GM12878 (cell line): ENCODE measurements at regions of chr1 and their contacts with region 1.

Region 1: DNA sequence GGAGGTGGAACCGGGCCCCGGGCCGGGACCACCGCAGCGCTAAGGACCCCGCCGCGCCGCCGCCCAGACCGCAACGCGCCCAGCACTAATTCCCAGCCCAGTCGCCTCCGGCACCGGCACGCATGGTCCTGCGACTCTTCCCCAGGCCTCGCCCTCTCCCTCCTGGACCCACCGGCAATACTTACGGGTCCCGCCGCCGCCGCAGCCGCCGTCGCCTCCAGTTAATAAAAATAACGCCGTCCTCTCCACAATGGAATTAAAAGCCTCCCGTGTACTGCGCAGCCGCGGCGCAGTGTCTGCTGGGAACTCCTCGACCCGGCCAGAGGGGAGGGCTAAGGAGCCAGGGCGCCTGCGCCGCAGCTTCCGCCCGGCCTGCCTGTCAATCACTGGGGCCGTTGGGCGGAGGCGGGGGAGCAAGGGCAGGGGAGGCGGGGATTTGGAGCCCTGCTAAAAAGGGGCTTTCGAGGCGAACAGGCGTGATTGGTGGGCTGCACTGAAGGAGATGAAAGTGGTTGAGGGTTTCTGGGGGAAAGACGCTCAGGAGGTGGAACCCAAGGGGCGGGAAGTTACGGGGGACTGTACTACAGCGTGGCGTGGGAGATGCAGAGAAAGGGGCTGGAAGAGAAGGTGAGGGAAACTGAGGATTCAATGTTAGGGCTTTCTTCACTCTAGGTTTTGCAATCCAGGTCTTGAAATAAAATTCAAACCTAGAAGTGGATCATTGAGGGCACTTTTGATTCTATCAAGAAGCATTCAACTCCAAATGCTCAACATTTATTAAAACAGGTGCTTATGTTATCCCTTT is at the start of gene ZNF281:
- DNase-seq: peak; percentile 85
- ATAC-seq: peak; percentile 94
- H3K4me3 ChIP-seq: peak within 1 kb of the TSS; percentile 82
- H3K27ac ChIP-seq: peak within 1 kb of the TSS; percentile 91
- H3K4me1 ChIP-seq: peaks cover 18% of the 10 kb centered on the region
- H3K27me3 ChIP-seq: no peaks in the 10 kb centered on the region
- CTCF ChIP-seq: no peak
- EP300 ChIP-seq: no peak
- POLR2A ChIP-seq: peak; percentile 80
- RAD21 ChIP-seq: no peak
- polyA plus RNA-seq, gene ZNF281: 8.3 to 9.4 TPM

Region 2: GRCh38 chr1:200423235-200423634 is 13.3 kb after region 1 on chr1:
- CTCF ChIA-PET with region 1: interaction called, 4 read pairs
- POLR2A ChIA-PET with region 1: no interaction called
- RAD21 ChIA-PET with region 1: no interaction called
- SMC1A ChIA-PET with region 1: interaction called, 15 read pairs
- in situ Hi-C with region 1: no loop called
- intact Hi-C with region 1: no loop called
- DNase-seq: no peak
- ATAC-seq: no peak
- H3K4me3 ChIP-seq: no peak overlapping the region
- H3K27ac ChIP-seq: no peak overlapping the region
- H3K4me1 ChIP-seq: no peaks in the 10 kb centered on the region
- H3K27me3 ChIP-seq: no peaks in the 10 kb centered on the region
- CTCF ChIP-seq: no peak
- EP300 ChIP-seq: no peak
- POLR2A ChIP-seq: no peak
- RAD21 ChIP-seq: no peak

Region 3: GRCh38 chr1:200437556-200438203 is 27.7 kb after region 1 on chr1:
- CTCF ChIA-PET with region 1: interaction called, 3 read pairs
- POLR2A ChIA-PET with region 1: no interaction called
- RAD21 ChIA-PET with region 1: interaction called, 8 read pairs
- SMC1A ChIA-PET with region 1: interaction called, 11 read pairs
- in situ Hi-C with region 1: no loop called
- intact Hi-C with region 1: no loop called
- DNase-seq: no peak
- ATAC-seq: peak; percentile 91
- H3K4me3 ChIP-seq: no peak overlapping the region
- H3K27ac ChIP-seq: peak overlapping the region; percentile 35
- H3K4me1 ChIP-seq: peaks cover 6% of the 10 kb centered on the region; the same call in 1 of the 2 replicates
- H3K27me3 ChIP-seq: no peaks in the 10 kb centered on the region
- CTCF ChIP-seq: no peak
- EP300 ChIP-seq: no peak
- POLR2A ChIP-seq: no peak
- RAD21 ChIP-seq: no peak

Region 4: DNA sequence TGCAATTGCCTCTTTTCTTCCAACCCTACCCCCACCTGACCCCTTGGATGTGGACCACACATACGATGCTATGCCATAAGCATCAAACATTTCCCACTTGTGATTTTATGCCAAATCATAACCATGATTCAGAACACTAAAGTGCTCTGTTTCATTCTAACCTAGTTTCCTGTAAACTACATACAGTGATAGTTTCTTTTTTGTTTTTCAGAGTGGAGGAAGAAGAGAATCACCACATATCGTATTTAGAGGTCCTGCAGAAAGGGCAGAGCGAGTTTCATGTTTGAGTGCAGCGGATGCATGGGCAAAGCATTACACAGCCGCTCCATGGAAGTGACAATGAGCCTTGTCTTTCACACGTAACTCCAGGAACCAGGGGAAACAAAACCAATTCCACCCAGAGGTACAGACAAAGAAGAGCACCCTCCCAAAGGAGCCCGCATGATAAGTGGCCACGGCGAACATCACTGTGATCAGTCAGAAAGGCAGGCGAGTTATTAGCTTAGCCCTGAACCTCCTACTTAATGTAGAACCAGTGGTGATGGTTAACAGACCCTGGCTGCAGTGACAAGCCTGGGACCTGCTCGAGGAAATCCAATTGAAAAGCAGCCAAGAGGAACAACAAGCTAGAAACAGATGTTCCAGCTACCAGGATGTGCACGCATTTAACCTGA is 63.9 kb after region 1 on chr1:
- CTCF ChIA-PET with region 1: interaction called, 7 read pairs
- POLR2A ChIA-PET with region 1: interaction called, 13 read pairs
- RAD21 ChIA-PET with region 1: interaction called, 13 read pairs
- SMC1A ChIA-PET with region 1: interaction called, 59 read pairs
- in situ Hi-C with region 1: no loop called
- intact Hi-C with region 1: no loop called
- DNase-seq: peak; percentile 57
- ATAC-seq: peak; percentile 69
- H3K4me3 ChIP-seq: peak overlapping the region; percentile 43
- H3K27ac ChIP-seq: peak overlapping the region; percentile 78
- H3K4me1 ChIP-seq: peaks cover 36% of the 10 kb centered on the region
- H3K27me3 ChIP-seq: no peaks in the 10 kb centered on the region
- CTCF ChIP-seq: no peak
- EP300 ChIP-seq: peak in 1 of 2 experiments; percentile 29; a peak in 1 of 4 replicates
- POLR2A ChIP-seq: peak; percentile 28; the same call in 1 of the 2 replicates
- RAD21 ChIP-seq: no peak